Vagina (tissue), 2 donors: ENCODE measurements at regions of chr16 and their contacts with region 1.

Region 1: GRCh38 chr16:52526830-52527229 is 20.1 kb downstream of the TOX3 start:
- DNase-seq: no peak
- H3K4me3 ChIP-seq: no peak overlapping the region
- H3K27ac ChIP-seq: no peak overlapping the region
- H3K4me1 ChIP-seq: no peaks in the 10 kb centered on the region
- H3K27me3 ChIP-seq: no peaks in the 10 kb centered on the region
- CTCF ChIP-seq: no peak
- POLR2A ChIP-seq: no peak

Region 2: DNA sequence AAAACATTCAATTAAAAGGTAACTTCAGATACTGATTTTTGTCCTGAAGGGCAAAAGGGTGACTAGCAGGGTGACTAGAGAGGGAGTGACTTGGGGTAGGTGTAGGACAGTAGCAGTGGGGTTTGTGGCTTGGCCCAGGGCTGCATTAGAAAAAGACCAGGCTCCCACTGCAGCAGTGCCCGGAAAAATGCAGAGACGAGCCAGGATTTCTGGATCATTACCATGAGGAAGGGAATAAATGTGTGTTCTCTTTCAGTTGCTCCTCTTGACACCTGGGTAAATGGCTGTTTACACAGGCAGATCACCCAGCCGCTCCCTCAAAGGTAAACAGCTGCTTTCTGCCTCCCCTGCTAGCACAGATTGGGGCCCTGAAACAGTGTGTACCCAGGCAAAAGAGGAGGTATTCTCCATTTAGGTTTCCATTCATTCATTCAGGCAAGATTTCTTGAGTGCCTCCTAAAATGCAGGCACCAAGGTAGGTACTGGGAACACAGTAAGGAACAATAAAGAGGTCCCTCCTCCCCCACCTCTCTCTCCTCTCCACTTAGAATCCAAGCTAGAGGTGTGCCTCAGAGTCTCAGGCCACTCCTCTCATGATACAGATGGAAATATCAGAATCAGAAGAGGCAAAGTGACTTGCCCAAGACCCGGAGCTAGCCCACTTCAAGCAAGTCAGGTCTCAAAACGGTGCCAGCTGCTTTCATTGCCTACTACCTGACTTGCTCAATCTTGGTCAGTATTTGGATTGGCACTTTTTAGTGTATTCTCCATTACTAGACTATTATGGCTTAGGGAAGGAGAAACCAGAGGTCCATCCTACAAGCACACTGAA is 35.3 kb after region 1 on chr16:
- intact Hi-C with region 1: loop called (anchors 1 kb)
- DNase-seq: no peak
- H3K4me3 ChIP-seq: no peak overlapping the region
- H3K27ac ChIP-seq: no peak overlapping the region
- H3K4me1 ChIP-seq: no peaks in the 10 kb centered on the region
- H3K27me3 ChIP-seq: no peaks in the 10 kb centered on the region
- CTCF ChIP-seq: no peak
- POLR2A ChIP-seq: no peak

Region 3: GRCh38 chr16:53773150-53773846 is 1246.5 kb after region 1 on chr16:
- intact Hi-C with region 1: no loop called
- DNase-seq: no peak
- H3K4me3 ChIP-seq: no peak overlapping the region
- H3K27ac ChIP-seq: peak overlapping the region; percentile 10
- H3K4me1 ChIP-seq: peaks cover 60% of the 10 kb centered on the region
- H3K27me3 ChIP-seq: no peaks in the 10 kb centered on the region
- CTCF ChIP-seq: peak in 2 of 3 experiments; percentile 14 to 28
- POLR2A ChIP-seq: no peak